Activated B cell treated with CpG ODN at 0.5 μM for 24 hours (primary cell): ENCODE measurements at regions of chr5 and their contacts with region 1.

Region 1: DNA sequence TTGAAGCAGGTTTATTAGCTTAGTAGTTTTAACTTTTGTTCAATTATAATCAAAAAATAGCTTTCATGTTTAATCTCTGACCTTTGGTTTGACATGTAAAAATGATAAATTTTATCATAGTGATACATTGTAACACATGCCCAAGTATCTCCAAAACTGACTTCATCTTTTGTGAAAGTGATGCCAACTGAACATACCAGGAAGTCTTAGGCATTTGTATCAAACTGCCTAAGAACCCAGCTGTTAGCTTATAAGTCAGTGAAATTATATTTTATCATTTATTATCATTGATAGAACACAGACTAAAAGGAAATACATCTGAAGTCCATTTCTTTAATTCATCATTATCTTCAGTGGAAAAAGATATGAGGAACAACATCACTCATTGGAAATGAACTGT is 39.1 kb downstream of the NIPBL start:
- DNase-seq: no peak
- ATAC-seq: no peak
- H3K4me3 Mint-ChIP-seq: no peak overlapping the region
- H3K27ac Mint-ChIP-seq: no peak overlapping the region
- H3K4me1 Mint-ChIP-seq: peaks cover 44% of the 10 kb centered on the region
- H3K27me3 Mint-ChIP-seq: no peaks in the 10 kb centered on the region
- CTCF ChIP-seq: no peak

Region 2: DNA sequence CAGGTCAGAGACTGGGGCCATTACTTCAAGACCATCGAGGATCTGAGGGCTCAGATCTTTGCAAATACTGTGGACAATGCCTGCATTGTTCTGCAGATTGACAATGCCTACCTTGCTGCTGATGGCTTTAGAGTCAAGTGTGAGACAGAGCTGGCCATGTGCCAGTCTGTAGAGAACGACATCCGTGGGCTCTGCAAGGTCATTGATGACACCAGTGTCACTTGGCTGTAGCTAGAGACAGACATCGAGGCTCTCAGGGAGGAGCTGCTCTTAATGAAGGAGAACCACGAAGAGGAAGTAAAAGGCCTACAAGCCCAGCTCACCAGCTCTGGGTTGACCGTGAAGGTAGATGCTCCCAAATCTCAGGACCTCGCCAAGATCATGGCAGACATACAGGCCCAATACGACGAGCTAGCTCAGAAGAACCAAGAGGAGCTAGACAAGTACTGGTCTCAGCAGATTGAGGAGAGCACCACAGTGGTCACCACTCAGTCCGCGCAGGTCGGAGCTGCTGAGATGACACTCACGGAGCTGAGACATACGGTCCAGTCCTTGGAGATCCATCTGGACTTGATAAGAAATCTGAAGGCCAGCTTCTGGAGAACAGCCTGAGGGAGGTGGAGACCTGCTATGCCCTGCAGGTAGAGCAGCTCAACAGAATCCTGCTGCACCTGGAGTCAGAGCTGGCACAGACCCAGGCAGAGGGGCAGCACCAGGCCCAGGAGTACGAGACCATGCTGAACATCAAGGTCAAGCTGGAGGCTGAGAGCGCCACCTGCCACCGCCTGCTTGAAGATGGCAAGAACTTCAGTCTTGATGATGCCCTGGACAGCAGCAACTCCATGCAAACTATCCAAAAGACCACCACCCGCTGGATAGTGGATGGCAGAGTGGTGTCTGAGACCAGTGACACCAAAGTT is 29.8 kb before region 1 on chr5:
- CTCF ChIA-PET with region 1: no interaction called
- POLR2A ChIA-PET with region 1: no interaction called
- intact Hi-C with region 1: loop called (anchors 5 kb)
- DNase-seq: no peak
- ATAC-seq: no peak
- H3K4me3 Mint-ChIP-seq: peak overlapping the region; percentile 41
- H3K27ac Mint-ChIP-seq: no peak overlapping the region
- H3K4me1 Mint-ChIP-seq: peaks cover 71% of the 10 kb centered on the region
- H3K27me3 Mint-ChIP-seq: no peaks in the 10 kb centered on the region
- CTCF ChIP-seq: no peak

Region 3: DNA sequence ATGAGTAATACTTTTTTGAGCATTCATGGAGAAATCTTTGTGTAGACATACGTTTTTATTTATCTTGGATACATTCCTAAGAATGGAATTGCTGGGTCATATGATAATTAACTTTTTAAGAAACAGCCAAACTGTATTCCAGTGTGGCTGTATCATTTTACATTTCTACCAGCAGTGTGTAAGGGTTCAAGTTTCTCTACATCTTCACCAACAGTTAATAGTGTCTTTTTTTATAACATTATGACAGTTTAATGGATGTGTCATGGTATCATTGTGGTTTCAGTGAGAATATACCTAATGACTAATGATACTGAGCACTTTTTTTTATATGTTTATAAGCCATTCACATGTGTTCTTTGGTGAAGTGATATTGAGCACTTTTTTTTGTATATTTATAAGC is 13.3 kb after region 1 on chr5:
- CTCF ChIA-PET with region 1: no interaction called
- POLR2A ChIA-PET with region 1: no interaction called
- intact Hi-C with region 1: loop called (anchors 2 kb)
- DNase-seq: no peak
- ATAC-seq: no peak
- H3K4me3 Mint-ChIP-seq: peak overlapping the region; percentile 36
- H3K27ac Mint-ChIP-seq: no peak overlapping the region
- H3K4me1 Mint-ChIP-seq: peaks cover 64% of the 10 kb centered on the region
- H3K27me3 Mint-ChIP-seq: no peaks in the 10 kb centered on the region
- CTCF ChIP-seq: no peak